Activated CD8-positive, alpha-beta memory T cell treated with anti-CD3 and anti-CD28 coated beads, Interleukin-2, amount 10 ng/mL, durations not matched to agents 7 days and 5 days (primary cell): ENCODE measurements at regions of chr10 and their contacts with region 1.

Region 1: DNA sequence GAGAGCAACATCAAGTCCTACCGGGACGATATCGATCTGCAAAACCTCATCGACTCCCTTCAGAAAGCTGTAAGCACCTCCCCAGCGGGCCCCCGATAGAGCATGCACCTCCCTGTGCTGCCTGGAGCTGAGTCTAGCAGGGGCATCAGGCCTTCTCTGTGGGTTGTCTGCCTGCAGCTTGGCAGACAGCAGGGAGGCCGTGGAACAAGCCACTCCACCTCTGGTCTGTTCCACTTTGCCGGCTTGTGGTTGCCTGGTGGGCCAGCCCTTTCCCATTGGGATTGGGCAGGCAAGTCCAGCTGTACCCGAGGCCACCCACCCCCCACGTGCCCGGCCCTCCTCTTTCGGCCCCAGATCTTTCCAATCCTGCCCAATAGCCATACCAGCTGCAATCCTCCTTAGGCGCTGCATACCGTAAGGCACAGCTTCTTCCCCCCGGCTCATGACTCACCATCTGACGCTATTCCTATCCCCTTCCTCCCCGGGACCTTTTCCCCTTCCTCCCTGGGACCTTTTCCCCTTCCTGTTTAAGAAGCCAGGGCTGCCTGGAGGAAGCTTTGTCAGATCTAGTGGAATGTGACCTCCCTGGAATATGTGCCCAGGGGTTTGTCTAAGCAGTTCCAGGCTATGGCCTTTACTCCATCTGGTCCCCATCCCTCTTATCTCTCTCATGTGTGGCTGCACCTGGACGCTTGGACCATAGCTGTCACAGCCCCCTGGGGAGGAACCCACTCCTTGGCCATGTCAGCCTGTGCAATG is 28.1 kb upstream of the SH2D4B start:
- DNase-seq: no peak
- ATAC-seq: no peak
- H3K4me3 Mint-ChIP-seq: no peak overlapping the region
- H3K27ac Mint-ChIP-seq: no peak overlapping the region
- H3K4me1 Mint-ChIP-seq: peaks cover 33% of the 10 kb centered on the region
- H3K27me3 Mint-ChIP-seq: no peaks in the 10 kb centered on the region

Region 2: DNA sequence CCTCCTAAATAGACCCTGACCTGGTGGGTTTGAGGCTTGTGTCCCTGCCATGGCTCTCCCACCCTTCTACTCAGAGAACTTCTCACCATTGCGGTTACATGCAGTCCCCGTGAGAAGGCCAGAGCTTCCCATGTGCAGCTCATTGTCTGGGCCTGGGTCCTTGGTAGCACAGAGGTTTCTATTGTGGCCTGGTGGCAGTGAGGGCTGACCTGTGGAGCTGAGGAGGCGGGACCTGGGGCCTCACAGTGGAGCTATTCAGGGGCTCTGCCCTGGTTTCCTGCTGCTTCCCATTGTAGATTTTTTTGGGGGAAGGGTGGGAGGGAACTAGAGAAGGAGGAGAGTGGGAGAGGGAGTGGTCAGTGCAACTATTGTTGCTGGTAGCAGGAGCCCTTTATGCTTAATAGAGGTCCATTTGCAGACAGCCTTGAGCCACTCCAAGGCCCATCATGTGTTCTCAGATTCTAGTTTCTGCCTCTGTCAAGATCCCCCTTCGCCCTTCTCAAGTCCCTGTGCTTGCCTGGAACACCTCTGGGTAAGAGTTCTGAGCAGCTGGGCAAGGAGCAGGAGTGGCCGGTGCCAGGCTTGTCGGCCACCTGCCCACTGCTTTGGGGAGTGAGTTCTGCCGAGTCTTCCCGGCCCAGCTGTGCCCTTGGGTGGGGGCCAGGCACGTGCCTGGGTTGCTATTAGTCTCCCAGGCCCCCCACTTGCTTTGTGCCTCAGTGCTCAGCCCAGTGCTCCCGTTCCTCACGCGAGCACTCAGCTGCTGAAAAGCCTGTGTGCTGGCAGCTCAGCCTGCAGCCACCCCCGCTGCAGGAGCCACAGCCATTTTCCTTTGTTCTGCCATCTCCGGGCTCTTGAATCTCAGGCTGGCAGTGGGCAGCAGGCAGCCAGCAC is 44.8 kb before region 1 on chr10:
- CTCF ChIA-PET with region 1: interaction called, 378 read pairs
- DNase-seq: peak; percentile 44
- ATAC-seq: no peak
- H3K4me3 Mint-ChIP-seq: peak overlapping the region; percentile 67
- H3K27ac Mint-ChIP-seq: peak overlapping the region; percentile 84
- H3K4me1 Mint-ChIP-seq: peaks cover 98% of the 10 kb centered on the region
- H3K27me3 Mint-ChIP-seq: no peaks in the 10 kb centered on the region

Region 3: GRCh38 chr10:80498833-80499741 is 10.5 kb before region 1 on chr10:
- CTCF ChIA-PET with region 1: interaction called, 151 read pairs
- DNase-seq: peak; percentile 77
- ATAC-seq: peak; percentile 82
- H3K4me3 Mint-ChIP-seq: peak overlapping the region; percentile 17
- H3K27ac Mint-ChIP-seq: peak overlapping the region; percentile 83
- H3K4me1 Mint-ChIP-seq: peaks cover 94% of the 10 kb centered on the region
- H3K27me3 Mint-ChIP-seq: no peaks in the 10 kb centered on the region

Region 4: DNA sequence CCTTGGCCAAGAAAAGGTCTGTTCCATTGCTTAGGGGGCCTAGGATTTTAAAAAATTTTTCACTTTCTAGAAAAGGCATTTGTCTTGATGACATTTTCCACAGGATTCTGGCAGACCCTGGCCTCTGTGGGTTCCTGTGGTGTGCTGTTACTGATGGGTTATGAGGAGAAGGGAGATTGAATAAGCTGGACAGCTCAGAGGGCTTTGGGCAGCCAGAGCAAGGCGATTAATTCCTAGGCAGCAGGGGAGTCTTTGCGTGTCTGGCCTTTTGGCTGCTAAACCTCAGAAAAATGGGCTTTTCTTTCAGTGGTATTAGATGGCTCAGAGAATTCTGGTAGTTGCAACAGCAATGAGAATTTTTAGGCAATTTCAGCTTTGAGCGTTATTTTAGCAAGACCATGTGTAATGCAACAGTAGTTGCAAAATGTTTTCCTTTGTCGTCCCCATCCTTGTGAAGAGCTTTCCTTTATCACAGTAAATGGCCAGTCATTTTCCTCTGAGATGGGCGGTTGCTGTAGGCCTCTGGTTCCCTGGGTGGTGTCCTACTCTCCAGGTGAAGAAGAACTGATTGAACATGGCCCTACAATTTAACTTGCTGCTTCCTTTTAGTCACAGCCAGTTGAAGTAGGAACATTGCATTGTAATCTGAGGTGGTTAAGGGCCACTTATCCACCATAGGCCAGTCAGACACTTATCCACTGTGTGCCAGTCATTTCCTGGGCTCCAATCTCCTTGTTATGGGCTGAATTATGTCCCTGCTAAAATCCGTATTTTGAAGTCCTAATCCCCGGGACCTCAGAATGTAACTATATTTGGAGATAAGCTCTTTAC is 71.3 kb after region 1 on chr10:
- CTCF ChIA-PET with region 1: no interaction called
- DNase-seq: peak; percentile 2
- ATAC-seq: no peak
- H3K4me3 Mint-ChIP-seq: no peak overlapping the region
- H3K27ac Mint-ChIP-seq: no peak overlapping the region
- H3K4me1 Mint-ChIP-seq: peaks cover 3% of the 10 kb centered on the region
- H3K27me3 Mint-ChIP-seq: peaks cover 27% of the 10 kb centered on the region

Region 5: DNA sequence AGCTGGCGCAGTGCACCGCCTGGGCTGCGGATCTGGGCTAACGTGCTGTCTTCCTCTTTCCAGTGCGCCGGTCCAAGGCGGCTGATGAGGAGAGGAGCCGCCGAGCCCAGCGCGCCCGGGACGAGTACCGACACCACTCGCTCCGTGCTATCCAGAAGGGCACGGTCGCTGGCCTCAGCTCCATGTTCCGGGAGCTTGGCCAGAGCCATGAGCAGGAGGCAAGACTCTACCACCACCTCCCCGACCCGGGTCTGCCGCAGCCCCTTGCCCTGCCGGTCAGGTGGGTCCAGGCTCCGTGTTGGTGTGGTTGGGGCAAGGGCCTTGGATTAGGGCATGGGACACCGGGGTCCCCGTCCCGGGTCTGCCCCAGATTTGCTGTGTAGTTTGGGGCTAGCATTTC is 93.9 kb after region 1 on chr10:
- CTCF ChIA-PET with region 1: no interaction called
- DNase-seq: no peak
- ATAC-seq: no peak
- H3K4me3 Mint-ChIP-seq: no peak overlapping the region
- H3K27ac Mint-ChIP-seq: no peak overlapping the region
- H3K4me1 Mint-ChIP-seq: peaks cover 1% of the 10 kb centered on the region
- H3K27me3 Mint-ChIP-seq: no peaks in the 10 kb centered on the region